H1 (cell line): ENCODE measurements at regions of chr15 and their contacts with region 1.

Region 1: DNA sequence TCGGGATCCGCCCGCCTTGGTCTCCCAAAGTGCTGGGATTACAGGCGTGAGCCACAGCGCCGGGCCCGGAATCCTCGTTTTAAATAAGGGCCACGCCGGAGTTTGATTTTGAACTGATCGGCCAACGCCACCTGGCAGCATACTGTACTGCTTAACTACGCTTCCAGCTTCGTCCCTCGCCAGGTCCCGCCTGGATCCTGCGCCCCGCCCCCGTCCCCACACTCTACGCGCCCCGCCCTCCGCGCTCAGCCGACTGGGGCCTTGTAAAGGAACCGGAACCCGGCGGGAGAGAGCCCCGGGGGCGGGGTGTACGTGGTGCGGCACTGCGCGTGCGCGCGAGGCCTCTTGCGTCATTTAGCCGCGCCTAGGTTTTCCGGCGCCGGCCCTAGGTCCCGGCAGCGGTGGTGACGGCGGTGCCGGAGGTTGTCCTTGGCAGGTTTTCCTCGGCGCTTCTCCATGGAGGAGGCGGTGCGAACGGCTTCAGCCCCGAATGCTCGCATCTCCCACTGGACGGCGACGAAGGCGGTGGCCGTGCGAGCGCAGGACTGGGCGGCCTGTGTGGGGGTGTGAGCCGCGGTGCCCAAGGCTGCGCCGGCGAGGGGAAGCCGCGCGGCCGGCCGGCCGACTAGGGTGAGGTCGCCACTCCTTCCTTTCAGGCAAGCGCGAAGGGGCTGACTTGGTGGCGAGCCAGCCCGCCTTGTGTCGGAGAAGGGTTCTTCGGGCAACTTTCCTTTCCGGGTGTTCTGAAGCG is at the start of gene NIPA2:
- DNase-seq: peak; percentile 93 to 100
- H3K4me3 ChIP-seq: peak within 1 kb of the TSS; percentile 68 to 99 (median 96)
- H3K27ac ChIP-seq: peak within 1 kb of the TSS; percentile 90
- H3K4me1 ChIP-seq: peaks cover 0 to 4% (median 3%) of the 10 kb centered on the region in 4 experiments; a peak in 3 of 7 replicates
- H3K27me3 ChIP-seq: no peaks in the 10 kb centered on the region; a peak in 1 of 7 replicates
- CTCF ChIP-seq: no peak
- EP300 ChIP-seq: no peak; a peak in 1 of 3 replicates
- POLR2A ChIP-seq: peak; percentile 75 to 83
- RAD21 ChIP-seq: peak in 1 of 2 experiments; percentile 10; a peak in 1 of 4 replicates
- total RNA-seq, gene NIPA2: 77.4 and 81.7 TPM in 2 replicates

Region 2: GRCh38 chr15:22827125-22827524 is 11.3 kb before region 1 on chr15:
- CTCF ChIA-PET with region 1: no interaction called
- POLR2A ChIA-PET with region 1: interaction called, 24 read pairs
- DNase-seq: peak in 1 of 2 experiments; percentile 49
- H3K4me3 ChIP-seq: no peak overlapping the region
- H3K27ac ChIP-seq: no peak overlapping the region
- H3K4me1 ChIP-seq: peaks cover 5 to 10% (median 8%) of the 10 kb centered on the region in 4 experiments
- H3K27me3 ChIP-seq: peaks cover 0 to 2% (median 0%) of the 10 kb centered on the region in 4 experiments; a peak in 2 of 7 replicates
- CTCF ChIP-seq: no peak
- EP300 ChIP-seq: peak in 1 of 2 experiments; percentile 14; a peak in 1 of 3 replicates
- POLR2A ChIP-seq: no peak
- RAD21 ChIP-seq: no peak

Region 3: DNA sequence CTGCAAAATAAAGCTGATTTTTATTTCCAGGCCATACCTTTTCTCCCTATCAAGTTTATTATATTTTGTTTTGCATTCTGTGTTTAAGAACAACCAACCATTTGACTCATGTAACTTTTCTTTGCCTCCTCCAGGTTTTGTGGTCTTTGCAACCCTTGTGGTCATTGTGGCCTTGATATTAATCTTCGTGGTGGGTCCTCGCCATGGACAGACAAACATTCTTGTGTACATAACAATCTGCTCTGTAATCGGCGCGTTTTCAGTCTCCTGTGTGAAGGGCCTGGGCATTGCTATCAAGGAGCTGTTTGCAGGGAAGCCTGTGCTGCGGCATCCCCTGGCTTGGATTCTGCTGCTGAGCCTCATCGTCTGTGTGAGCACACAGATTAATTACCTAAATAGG is 27.6 kb after region 1 on chr15:
- CTCF ChIA-PET with region 1: interaction called, 4 read pairs
- POLR2A ChIA-PET with region 1: interaction called, 11 read pairs
- DNase-seq: no peak
- H3K4me3 ChIP-seq: no peak overlapping the region
- H3K27ac ChIP-seq: no peak overlapping the region
- H3K4me1 ChIP-seq: no peaks in the 10 kb centered on the region
- H3K27me3 ChIP-seq: no peaks in the 10 kb centered on the region
- CTCF ChIP-seq: no peak
- EP300 ChIP-seq: no peak
- POLR2A ChIP-seq: no peak
- RAD21 ChIP-seq: no peak